CD4-positive, alpha-beta memory T cell (primary cell): ENCODE measurements at regions of chr19 and their contacts with region 1.

Region 1: DNA sequence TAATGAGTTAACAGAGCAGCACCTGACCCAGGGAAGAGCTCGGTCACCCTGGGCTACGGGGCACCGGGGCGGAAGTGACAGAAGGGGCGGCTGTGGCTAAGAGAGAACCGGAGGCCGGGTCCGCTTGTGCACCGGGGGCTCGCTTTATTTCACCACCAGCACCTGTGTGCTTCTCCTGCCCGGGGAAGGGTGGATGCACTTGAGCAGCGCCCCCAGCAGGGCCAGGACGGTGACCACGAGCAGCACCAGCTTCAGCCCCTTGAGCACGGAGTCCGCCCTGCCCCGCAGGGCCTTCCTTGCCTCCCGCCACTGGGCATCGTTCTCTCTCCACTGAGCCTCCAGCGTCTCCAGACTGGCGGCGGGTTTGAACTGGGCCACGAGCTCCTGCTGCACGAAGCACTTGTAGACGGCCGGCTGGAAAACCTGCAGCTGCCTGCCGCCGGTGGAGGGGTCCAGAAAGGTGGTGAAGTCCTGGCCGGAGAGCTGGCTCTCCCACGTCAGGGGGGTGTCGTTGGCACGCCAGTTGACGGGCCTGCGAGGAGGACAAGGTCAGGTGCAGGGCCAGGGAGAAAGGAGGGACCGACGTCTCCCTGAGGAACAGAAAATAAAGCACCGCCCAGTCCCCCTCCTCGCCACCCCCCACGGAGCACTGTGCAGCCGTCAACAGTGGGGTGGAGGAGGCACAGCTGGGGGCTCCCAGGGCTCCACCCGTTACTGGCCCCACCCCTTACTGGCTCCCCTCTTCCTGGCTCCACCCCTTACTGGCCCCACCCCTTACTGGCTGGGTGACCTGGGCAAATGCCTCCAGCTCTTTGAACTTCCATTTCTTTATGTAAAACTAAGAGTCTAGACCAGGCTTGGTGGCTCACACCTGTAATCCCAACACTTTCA is 3.6 kb downstream of the FAM187B start:
- DNase-seq: no peak
- H3K4me3 ChIP-seq: no peak overlapping the region
- H3K4me3 Mint-ChIP-seq: no peak overlapping the region
- H3K27ac ChIP-seq: no peak overlapping the region
- H3K27ac Mint-ChIP-seq: peak overlapping the region in 2 of 7 donors; percentile 32 to 35
- H3K4me1 ChIP-seq: peaks cover 44% of the 10 kb centered on the region
- H3K4me1 Mint-ChIP-seq: peaks cover 6 to 45% (median 26%) of the 10 kb centered on the region in 4 donors
- H3K27me3 ChIP-seq: no peaks in the 10 kb centered on the region
- H3K27me3 Mint-ChIP-seq: no peaks in the 10 kb centered on the region

Region 2: DNA sequence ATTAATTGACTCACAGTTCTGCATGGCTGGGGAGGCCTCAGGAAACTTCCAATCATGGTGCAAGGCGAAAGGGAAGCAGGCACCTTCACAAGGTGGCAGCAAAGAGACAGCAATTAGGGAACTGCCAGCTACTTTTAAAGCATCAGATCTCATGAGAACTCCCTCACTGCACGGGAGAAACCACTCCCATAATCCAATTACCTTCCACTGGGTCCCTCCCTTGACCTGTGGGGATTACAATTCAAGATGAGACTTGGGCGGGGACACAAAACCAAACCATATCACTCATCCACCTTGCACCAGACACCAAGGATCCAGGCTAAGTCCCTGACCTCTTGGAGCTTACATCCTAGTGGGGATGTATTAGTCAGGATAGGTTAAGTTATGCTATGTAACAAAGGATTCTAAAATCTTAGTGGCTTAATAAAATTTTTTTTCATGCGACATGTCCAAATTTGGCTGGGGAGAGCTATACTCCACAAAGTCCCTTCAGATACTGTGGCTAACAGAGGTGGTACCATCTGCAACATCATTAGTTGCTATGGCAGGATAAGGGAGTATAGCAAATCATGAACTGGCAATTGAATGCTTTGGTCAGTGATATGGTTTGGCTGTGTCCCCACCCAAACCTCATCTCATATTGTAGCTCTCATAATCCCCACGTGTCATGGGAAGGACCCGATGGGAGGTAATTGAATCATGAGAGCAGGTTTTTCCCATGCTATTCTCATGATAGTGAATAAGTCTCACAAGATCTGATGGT is 11.9 kb after region 1 on chr19:
- CTCF ChIA-PET with region 1: interaction called, 15 read pairs
- POLR2A ChIA-PET with region 1: interaction called, 17 read pairs
- intact Hi-C with region 1: no loop called
- DNase-seq: peak in 3 of 5 donors; percentile 34 to 38 (median 36)
- H3K4me3 ChIP-seq: no peak overlapping the region
- H3K4me3 Mint-ChIP-seq: no peak overlapping the region
- H3K27ac ChIP-seq: no peak overlapping the region
- H3K27ac Mint-ChIP-seq: peak overlapping the region in 5 of 7 donors; percentile 30 to 93 (median 59)
- H3K4me1 ChIP-seq: peaks cover 34% of the 10 kb centered on the region
- H3K4me1 Mint-ChIP-seq: peaks cover 20 to 42% (median 37%) of the 10 kb centered on the region in 4 donors
- H3K27me3 ChIP-seq: no peaks in the 10 kb centered on the region
- H3K27me3 Mint-ChIP-seq: no peaks in the 10 kb centered on the region